Activated CD4-positive, alpha-beta memory T cell treated with anti-CD3 and anti-CD28 coated beads for 36 hours (primary cell): ENCODE measurements at regions of chr11 and their contacts with region 1.

Region 1: DNA sequence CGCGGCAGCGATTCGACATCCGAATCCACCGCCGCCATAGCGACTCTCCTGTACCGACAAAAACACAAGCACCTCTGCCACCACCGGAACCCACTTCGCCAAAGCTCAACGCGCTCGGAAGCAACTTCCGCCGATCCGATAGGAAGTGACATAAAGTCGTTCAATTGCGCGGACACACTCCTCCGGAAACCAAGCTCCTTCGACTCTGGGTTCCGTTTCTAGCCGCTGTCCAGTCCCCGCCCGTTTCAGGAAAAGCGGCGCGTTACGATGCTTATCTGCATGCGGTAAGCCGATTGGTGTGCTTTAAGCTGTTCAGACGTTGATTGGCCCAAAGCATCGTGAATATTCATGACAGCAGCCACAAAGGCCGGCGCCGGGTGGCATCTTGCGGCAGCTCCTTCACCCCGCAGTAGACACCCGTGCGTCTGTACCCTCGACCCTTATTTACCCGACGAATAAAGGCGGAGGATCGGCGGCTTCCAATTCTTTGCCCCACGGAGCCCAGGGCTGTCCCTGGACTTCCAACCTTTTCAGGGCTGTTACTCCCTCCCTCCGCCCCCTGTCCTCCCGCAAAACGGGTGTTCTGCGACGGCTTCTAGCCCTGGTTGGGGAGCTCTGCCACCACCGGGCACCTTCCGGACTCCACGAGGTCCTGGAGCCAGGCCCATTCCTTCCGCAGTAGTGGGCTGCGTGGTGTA is at the start of gene TUT1:
- DNase-seq: peak; percentile 99
- H3K4me3 Mint-ChIP-seq: peak within 1 kb of the TSS; percentile 100
- H3K27ac Mint-ChIP-seq: peak within 1 kb of the TSS; percentile 97
- H3K4me1 Mint-ChIP-seq: peaks cover 52% of the 10 kb centered on the region
- H3K27me3 Mint-ChIP-seq: no peaks in the 10 kb centered on the region
- total RNA-seq, gene TUT1: 32.7 to 34.2 TPM

Region 2: GRCh38 chr11:62427630-62428233 is 163.9 kb before region 1 on chr11:
- CTCF ChIA-PET with region 1: interaction called, 40 read pairs
- POLR2A ChIA-PET with region 1: interaction called, 19 read pairs
- intact Hi-C with region 1: no loop called
- DNase-seq: peak; percentile 39
- H3K4me3 Mint-ChIP-seq: peak overlapping the region; percentile 27
- H3K27ac Mint-ChIP-seq: peak overlapping the region; percentile 79
- H3K4me1 Mint-ChIP-seq: peaks cover 32% of the 10 kb centered on the region
- H3K27me3 Mint-ChIP-seq: no peaks in the 10 kb centered on the region

Region 3: GRCh38 chr11:62573592-62574362 is 17.8 kb before region 1 on chr11 and contains the start of gene EEF1G:
- CTCF ChIA-PET with region 1: interaction called, 17 read pairs
- POLR2A ChIA-PET with region 1: interaction called, 33 read pairs
- intact Hi-C with region 1: loop called (anchors 1 kb)
- DNase-seq: peak; percentile 99
- H3K4me3 Mint-ChIP-seq: peak within 1 kb of the TSS; percentile 93
- H3K27ac Mint-ChIP-seq: peak within 1 kb of the TSS; percentile 96
- H3K4me1 Mint-ChIP-seq: peaks cover 50% of the 10 kb centered on the region
- H3K27me3 Mint-ChIP-seq: no peaks in the 10 kb centered on the region
- total RNA-seq, gene EEF1G: 1,956 to 1,989 TPM

Region 4: DNA sequence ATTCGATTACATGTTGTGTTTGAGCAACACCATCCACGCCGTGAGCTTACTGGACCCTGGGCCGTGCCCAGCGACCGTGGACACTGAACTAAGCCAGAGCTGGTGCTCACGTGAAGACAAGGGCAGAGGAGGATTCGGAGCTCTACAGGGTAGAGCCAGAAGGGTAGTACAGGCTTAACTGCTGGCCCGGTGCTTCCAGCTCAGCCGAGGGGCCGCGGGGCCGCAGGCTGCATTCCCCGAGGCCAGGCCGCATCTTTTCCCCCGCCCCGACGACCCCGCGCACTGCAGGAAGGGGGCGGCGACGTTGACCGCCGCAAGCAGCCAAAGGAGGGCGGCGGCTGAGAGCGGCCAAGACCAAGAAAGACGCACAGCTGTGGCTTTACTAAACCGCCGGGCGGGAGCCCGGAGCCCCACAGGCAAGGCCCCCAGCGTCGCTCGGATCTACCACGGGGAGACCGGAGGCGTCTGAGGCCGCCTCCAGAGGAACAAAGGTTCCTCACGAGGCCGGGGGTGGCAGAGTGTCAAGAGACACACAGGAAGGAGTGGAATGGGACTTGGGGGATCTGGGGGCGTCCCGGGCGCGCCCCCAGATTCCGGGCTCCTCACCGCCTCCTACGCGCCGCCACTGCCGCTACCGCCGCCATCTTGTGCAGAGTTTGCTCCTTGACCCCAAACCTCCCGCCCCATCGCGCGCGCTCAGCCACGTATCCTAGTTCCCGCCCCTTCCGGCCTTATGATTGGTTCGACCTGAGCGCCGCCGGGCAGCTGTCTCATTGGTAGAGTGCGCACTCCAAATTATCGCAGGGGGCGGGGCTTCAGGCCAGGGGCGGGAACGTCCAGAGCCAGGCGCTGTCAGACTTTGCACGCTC is 54.6 kb after region 1 on chr11 and contains the start of gene GANAB:
- CTCF ChIA-PET with region 1: interaction called, 5 read pairs
- POLR2A ChIA-PET with region 1: interaction called, 16 read pairs
- intact Hi-C with region 1: loop called (anchors 1 kb)
- DNase-seq: peak; percentile 100
- H3K4me3 Mint-ChIP-seq: peak within 1 kb of the TSS; percentile 94
- H3K27ac Mint-ChIP-seq: peak within 1 kb of the TSS; percentile 94
- H3K4me1 Mint-ChIP-seq: peaks cover 30% of the 10 kb centered on the region
- H3K27me3 Mint-ChIP-seq: no peaks in the 10 kb centered on the region
- total RNA-seq, gene GANAB: 247 to 249 TPM

Region 5: DNA sequence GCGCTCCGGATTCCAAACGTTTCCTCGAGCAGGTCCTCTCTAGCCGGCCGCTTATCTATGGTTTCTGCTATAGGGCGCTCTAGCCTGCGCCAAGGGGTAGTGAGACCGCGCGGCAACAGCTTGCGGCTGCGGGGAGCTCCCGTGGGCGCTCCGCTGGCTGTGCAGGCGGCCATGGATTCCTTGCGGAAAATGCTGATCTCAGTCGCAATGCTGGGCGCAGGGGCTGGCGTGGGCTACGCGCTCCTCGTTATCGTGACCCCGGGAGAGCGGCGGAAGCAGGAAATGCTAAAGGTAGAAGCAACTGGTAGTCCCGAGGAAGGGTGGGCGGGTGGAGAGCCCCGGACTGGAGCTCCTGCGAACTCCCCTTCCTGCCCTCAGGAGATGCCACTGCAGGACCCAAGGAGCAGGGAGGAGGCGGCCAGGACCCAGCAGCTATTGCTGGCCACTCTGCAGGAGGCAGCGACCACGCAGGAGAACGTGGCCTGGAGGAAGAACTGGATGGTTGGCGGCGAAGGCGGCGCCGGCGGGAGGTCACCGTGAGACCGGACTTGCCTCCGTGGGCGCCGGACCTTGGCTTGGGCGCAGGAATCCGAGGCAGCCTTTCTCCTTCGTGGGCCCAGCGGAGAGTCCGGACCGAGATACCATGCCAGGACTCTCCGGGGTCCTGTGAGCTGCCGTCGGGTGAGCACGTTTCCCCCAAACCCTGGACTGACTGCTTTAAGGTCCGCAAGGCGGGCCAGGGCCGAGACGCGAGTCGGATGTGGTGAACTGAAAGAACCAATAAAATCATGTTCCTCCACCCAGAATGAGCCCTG is 80.2 kb after region 1 on chr11 and contains the starts of genes LBHD1 and UQCC3:
- CTCF ChIA-PET with region 1: interaction called, 13 read pairs
- POLR2A ChIA-PET with region 1: interaction called, 62 read pairs
- intact Hi-C with region 1: no loop called
- DNase-seq: peak; percentile 93
- H3K4me3 Mint-ChIP-seq: peak within 1 kb of the TSS; percentile 94
- H3K27ac Mint-ChIP-seq: peak within 1 kb of the TSS; percentile 98
- H3K4me1 Mint-ChIP-seq: peaks cover 55% of the 10 kb centered on the region
- H3K27me3 Mint-ChIP-seq: no peaks in the 10 kb centered on the region
- total RNA-seq, gene LBHD1: 10.8 to 14.1 TPM
- total RNA-seq, gene UQCC3: 6.0 to 6.2 TPM

Region 6: GRCh38 chr11:62705880-62706849 is 114.6 kb after region 1 on chr11:
- CTCF ChIA-PET with region 1: interaction called, 4 read pairs
- POLR2A ChIA-PET with region 1: interaction called, 27 read pairs
- intact Hi-C with region 1: loop called (anchors 5 kb)
- DNase-seq: peak; percentile 96
- H3K4me3 Mint-ChIP-seq: peak overlapping the region; percentile 85
- H3K27ac Mint-ChIP-seq: peak overlapping the region; percentile 70
- H3K4me1 Mint-ChIP-seq: peaks cover 50% of the 10 kb centered on the region
- H3K27me3 Mint-ChIP-seq: no peaks in the 10 kb centered on the region

Region 7: DNA sequence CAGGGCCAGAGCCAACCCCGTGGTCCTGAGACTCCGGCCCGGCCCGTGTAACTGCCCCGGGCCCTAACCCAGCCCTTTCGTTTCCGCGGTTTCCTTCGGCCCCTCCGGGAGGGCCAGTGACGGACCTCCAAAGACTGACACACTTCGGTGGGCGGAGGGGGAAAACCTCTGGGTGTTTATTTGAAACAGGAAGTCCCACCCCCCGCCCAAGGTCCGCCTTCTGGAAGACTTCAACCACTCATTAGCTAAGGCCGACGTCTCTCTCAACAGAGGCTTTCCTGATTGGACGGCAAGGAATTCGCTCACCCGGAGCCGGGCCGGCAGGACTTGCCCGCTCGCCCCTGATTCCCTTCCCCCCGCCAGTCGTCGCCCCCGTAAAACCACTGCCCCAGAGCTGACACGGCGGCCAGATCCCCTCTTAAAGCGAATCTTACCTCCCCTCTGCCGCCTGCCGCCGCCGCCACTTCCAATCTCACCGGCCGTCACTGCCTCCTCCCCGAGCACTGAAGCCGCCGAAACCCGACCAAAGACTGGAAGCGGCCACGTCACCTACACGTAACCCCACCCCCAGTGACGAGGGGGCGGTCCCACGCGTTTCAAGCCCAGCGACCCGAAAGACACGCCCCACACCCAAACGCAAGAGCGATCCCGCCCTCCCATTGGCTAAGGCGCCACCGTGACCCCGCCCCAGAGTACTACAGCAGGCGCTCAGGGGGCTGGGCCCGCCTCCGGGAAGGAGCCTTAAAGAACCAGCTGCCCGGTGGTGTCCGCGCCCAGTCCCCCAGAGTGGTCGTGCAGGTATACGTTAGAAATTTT is 240.1 kb after region 1 on chr11 and contains the start of gene STX5:
- CTCF ChIA-PET with region 1: no interaction called
- POLR2A ChIA-PET with region 1: no interaction called
- intact Hi-C with region 1: loop called (anchors 2 kb)
- DNase-seq: peak; percentile 100
- H3K4me3 Mint-ChIP-seq: peak within 1 kb of the TSS; percentile 84
- H3K27ac Mint-ChIP-seq: peak within 1 kb of the TSS; percentile 93
- H3K4me1 Mint-ChIP-seq: peaks cover 42% of the 10 kb centered on the region
- H3K27me3 Mint-ChIP-seq: no peaks in the 10 kb centered on the region
- total RNA-seq, gene STX5: 24.6 to 29.2 TPM